ENCODE measurements at regions of chr4 and their contacts with region 1.

Region 1: DNA sequence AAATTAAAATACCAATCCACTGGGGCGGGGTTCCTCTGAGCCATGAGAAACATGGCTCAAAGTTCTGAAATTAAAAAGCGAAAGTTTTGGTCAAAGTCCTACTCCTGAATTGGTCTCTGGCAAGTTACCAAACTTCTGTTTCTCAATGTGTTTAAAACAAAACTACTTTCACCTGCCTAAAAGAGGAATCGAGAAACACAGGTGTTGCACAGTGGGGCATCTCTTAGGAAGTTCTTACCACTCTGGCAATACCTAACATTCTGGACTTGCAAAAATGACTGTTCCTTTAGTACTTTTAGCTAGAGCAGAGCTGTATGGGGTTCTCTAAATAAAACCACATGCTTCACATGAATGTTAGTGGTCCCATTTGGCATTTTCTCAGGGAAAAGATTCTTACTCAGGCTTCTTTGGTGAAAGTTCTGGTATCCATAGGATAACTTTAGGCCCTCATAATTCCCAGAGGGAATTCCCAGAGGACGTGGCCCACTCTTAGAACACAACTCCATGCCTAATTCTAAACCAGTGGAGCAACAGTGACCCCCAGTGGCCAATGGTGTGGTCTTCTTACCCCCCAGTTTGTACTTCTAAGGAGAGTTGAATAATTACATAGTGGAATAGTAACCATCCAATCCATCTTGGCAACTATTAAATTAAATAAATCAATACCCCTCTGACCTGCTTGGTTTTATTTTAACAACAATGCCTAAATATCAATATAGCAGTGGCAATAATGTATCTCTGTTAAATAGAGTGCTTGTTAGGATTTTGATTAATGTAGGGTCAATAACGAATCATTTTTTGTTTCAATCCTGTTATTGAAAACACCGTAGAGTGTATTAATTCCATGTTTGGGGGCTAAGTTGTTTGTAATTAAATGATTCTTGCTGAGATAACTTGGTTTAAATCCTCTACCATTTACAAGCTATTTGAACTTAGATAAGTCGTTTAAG is 21.9 kb downstream of the BMP3 start:
- DNase-seq: peak; percentile 99
- H3K4me3 ChIP-seq: peak overlapping the region; percentile 50
- H3K27ac ChIP-seq: peak overlapping the region; percentile 95
- H3K4me1 ChIP-seq: peaks cover 75% of the 10 kb centered on the region
- CTCF ChIP-seq: peak; percentile 100

Region 2: GRCh38 chr4:80610845-80611677 is 441.3 kb before region 1 on chr4:
- CTCF ChIA-PET with region 1: no interaction called
- POLR2A ChIA-PET with region 1: interaction called, 30 read pairs
- intact Hi-C with region 1: loop called (anchors 1 kb)
- DNase-seq: peak; percentile 99
- H3K4me3 ChIP-seq: peak overlapping the region; percentile 40
- H3K27ac ChIP-seq: peak overlapping the region; percentile 99
- H3K4me1 ChIP-seq: peaks cover 69% of the 10 kb centered on the region
- CTCF ChIP-seq: no peak

Region 3: GRCh38 chr4:80685214-80685613 is 367.2 kb before region 1 on chr4:
- CTCF ChIA-PET with region 1: no interaction called
- POLR2A ChIA-PET with region 1: no interaction called
- intact Hi-C with region 1: no loop called
- DNase-seq: peak; percentile 61
- H3K4me3 ChIP-seq: no peak overlapping the region
- H3K27ac ChIP-seq: peak overlapping the region; percentile 5
- H3K4me1 ChIP-seq: peaks cover 13% of the 10 kb centered on the region
- CTCF ChIP-seq: no peak

Region 4: DNA sequence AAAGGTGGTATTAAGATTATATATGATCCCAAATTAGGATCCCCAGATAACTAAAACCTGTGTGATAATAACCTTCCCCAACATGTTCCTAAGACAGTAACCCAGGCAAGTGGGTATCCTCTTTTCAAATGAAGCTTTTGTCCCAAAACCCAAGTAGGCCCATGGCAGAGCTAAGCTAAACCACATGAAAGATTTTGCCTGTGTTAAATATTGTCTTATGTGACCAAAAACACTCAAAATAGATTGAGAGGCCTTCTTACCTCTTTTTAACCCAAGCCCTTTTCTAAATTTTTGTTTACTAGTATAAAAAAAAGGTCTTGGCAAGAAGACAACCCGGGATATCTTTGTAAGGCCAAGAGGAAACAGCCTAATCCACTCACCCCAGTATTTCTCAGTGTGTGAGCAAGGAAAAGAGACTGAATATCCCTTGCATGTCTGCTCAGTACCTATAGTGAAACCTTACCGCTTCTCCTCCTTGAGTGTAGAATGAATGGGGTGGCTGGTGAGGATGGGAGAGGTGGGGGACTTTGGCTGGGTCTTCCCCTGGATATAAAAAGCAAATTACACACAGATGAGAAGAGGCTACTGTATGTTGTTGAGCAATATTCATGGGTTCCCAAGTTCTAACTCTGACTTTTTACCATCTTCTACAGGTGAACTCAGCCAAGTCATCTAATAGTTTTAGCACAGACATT is 210.7 kb before region 1 on chr4:
- CTCF ChIA-PET with region 1: no interaction called
- POLR2A ChIA-PET with region 1: no interaction called
- intact Hi-C with region 1: no loop called
- DNase-seq: no peak
- H3K4me3 ChIP-seq: no peak overlapping the region
- H3K27ac ChIP-seq: no peak overlapping the region
- H3K4me1 ChIP-seq: peaks cover 1% of the 10 kb centered on the region
- CTCF ChIP-seq: no peak

Region 5: GRCh38 chr4:80926446-80926845 is 125.9 kb before region 1 on chr4:
- CTCF ChIA-PET with region 1: no interaction called
- POLR2A ChIA-PET with region 1: interaction called, 13 read pairs
- intact Hi-C with region 1: loop called (anchors 1 kb)
- DNase-seq: no peak
- H3K4me3 ChIP-seq: no peak overlapping the region
- H3K27ac ChIP-seq: peak overlapping the region; percentile 84
- H3K4me1 ChIP-seq: peaks cover 36% of the 10 kb centered on the region
- CTCF ChIP-seq: no peak

Region 6: DNA sequence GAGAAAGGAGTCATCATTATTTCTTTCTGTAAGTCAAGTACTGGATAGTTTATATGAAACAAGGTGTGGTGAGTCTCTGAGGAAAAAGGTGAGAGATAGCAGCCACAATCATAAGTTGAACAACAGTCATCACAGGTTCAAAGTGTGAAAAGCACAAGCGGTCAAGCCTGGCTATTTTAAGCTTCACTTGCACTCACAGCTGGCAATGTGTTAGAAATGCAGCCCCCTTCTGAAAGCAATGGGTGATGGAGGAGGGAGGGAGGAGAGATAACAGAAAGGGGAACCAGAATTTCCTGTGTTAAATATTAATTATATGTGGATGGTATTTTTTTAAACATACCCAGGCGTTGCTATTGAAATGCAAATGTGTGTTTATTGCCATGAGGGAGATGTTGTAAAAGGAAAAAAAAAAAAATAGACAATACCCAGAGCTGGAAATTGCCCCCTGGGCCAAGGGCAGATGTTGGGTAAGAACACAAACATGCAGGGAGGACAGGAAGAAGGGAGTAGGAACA is 48.7 kb before region 1 on chr4:
- CTCF ChIA-PET with region 1: no interaction called
- POLR2A ChIA-PET with region 1: interaction called, 4 read pairs
- intact Hi-C with region 1: loop called (anchors 1 kb)
- DNase-seq: peak; percentile 95
- H3K4me3 ChIP-seq: peak overlapping the region; percentile 33
- H3K27ac ChIP-seq: peak overlapping the region; percentile 96
- H3K4me1 ChIP-seq: peaks cover 33% of the 10 kb centered on the region
- CTCF ChIP-seq: no peak

Region 7: GRCh38 chr4:81040012-81040659 is 12.3 kb before region 1 on chr4:
- CTCF ChIA-PET with region 1: interaction called, 6 read pairs
- POLR2A ChIA-PET with region 1: interaction called, 358 read pairs
- intact Hi-C with region 1: loop called (anchors 1 kb)
- DNase-seq: peak; percentile 82
- H3K4me3 ChIP-seq: peak overlapping the region; percentile 52
- H3K27ac ChIP-seq: peak overlapping the region; percentile 92
- H3K4me1 ChIP-seq: peaks cover 72% of the 10 kb centered on the region
- CTCF ChIP-seq: peak; percentile 96

Region 8: GRCh38 chr4:81142744-81143143 is 90.3 kb after region 1 on chr4:
- CTCF ChIA-PET with region 1: no interaction called
- POLR2A ChIA-PET with region 1: no interaction called
- intact Hi-C with region 1: no loop called
- DNase-seq: no peak
- H3K4me3 ChIP-seq: no peak overlapping the region
- H3K27ac ChIP-seq: no peak overlapping the region
- H3K4me1 ChIP-seq: no peaks in the 10 kb centered on the region
- CTCF ChIP-seq: no peak

Region 9: DNA sequence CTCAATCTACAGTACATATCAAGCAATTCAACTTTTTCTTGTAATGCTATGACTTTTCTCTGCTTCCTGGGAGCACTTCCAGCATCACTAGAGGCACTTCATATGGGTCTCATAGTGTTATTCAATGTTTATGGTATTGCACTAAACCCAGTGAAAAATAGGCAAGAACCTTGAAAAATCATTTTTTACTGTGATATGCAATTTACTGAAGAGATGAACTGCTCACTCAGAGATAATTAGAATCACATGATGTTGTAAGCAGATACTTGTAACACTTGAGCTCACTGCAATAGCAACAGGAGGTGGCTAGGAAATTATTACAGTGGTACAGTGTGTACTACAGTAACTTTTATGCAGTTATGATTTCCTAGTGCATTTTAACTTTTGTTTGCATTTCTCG is 326.0 kb after region 1 on chr4:
- CTCF ChIA-PET with region 1: no interaction called
- POLR2A ChIA-PET with region 1: no interaction called
- intact Hi-C with region 1: no loop called
- DNase-seq: no peak
- H3K4me3 ChIP-seq: no peak overlapping the region
- H3K27ac ChIP-seq: no peak overlapping the region
- H3K4me1 ChIP-seq: no peaks in the 10 kb centered on the region
- CTCF ChIP-seq: no peak

Measured in OCI-LY7 (cell line).